ENCODE measurements at regions of chr12 and their contacts with region 1.

Region 1: GRCh38 chr12:39365364-39366001 is 77.4 kb downstream of the KIF21A start:
- DNase-seq: no peak
- CTCF ChIP-seq: no peak

Region 2: DNA sequence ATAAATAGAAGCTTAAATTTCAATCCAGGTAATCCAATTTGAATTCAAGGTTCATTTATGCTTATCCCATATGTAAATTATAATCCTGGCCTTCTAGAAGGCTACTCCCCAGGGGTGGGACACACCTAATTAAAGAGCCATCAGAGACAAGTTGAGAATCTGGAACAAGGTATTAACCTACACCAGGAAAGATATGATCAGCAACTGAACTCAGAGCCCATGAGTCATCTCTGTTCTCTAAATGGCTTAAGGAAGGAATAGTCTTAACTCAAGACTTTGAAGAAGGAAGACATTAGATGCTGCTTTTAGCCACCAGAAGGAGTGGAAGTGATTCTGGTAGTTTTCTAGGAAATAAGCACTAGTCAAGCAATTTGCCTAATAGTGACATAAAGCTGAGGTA is 10.5 kb before region 1 on chr12:
- CTCF ChIA-PET with region 1: interaction called, 10 read pairs
- POLR2A ChIA-PET with region 1: no interaction called
- DNase-seq: no peak
- CTCF ChIP-seq: no peak